A549 (cell line): ENCODE measurements at regions of chr2 and their contacts with region 1.

Region 1: DNA sequence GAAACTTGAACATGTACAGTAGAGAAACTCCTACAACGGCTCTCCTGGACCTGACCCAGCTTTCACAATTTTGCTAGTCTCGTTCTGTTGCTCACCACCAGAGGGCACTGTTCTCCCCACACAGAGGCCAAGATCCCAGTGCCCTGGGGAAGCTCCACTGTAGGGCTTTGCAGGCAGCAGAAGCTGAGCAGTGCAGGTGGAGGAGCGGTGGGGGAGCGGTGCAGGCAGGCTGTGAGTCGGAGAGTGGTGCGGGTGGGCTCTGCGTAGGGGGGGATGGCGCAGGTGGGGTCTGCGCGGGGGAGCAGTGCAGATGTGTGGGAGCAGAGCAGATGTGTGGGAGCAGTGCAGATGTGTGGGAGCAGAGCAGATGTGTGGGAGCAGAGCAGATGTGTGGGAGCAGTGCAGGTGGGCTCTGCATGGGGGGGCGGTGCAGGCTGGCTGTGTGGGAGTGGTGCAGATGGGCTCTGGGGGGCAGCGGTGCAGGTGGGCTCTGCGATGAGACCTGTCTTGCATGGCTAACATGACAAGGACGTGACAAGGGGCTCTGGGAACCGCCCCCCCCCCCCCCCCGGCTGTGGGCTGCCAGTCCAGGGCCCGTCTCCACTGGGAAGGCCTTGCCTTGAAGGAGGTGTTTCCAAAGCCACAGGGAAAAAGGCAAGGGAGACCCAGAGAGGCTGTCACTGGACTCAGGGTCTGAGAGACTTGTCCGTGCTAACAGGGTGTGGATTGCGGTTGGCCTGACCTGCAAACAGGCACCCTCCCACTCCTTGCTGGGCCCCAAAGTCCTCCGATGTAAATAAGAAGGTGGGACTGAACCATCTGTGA is 7.3 kb downstream of the CYS1 start:
- DNase-seq: peak; percentile 88 to 95
- ATAC-seq: peak; percentile 94 to 96
- H3K4me3 ChIP-seq: no peak overlapping the region
- H3K27ac ChIP-seq: no peak overlapping the region
- H3K4me1 ChIP-seq: peaks cover 4% of the 10 kb centered on the region; the same call in 1 of the 3 replicates
- CTCF ChIP-seq: peak; percentile 95
- EP300 ChIP-seq: no peak
- POLR2A ChIP-seq: no peak
- RAD21 ChIP-seq: peak; percentile 81 to 85

Region 2: DNA sequence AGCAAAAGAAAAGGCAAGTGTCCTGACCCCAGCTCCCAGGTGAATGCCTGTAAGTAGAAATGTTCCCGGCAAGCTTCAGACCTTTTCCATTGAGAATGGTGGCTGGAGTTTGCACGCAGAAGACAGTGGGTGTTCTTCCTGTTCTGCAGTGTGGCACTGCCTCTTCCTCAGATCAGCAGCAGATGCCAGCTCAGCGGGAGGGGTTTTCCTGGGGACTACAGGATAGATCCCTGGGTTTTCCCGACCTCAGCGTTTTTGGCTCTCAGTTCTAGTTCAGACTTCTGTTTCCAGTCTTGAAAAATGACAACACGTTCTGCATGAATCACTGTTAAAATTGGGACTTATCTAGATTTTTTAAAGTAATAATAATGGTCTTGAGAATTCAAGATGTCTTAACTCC is 82.1 kb before region 1 on chr2:
- CTCF ChIA-PET with region 1: interaction called, 10 read pairs
- POLR2A ChIA-PET with region 1: no interaction called
- DNase-seq: no peak
- ATAC-seq: no peak
- H3K4me3 ChIP-seq: no peak overlapping the region
- H3K27ac ChIP-seq: no peak overlapping the region
- H3K4me1 ChIP-seq: no peaks in the 10 kb centered on the region
- CTCF ChIP-seq: no peak
- EP300 ChIP-seq: no peak
- POLR2A ChIP-seq: no peak
- RAD21 ChIP-seq: no peak

Region 3: GRCh38 chr2:10016001-10016801 is 56.7 kb before region 1 on chr2:
- CTCF ChIA-PET with region 1: no interaction called
- POLR2A ChIA-PET with region 1: no interaction called
- DNase-seq: no peak
- ATAC-seq: peak in 1 of 2 experiments; percentile 35; a peak in 3 of 6 replicates
- H3K4me3 ChIP-seq: no peak overlapping the region
- H3K27ac ChIP-seq: no peak overlapping the region
- H3K4me1 ChIP-seq: no peaks in the 10 kb centered on the region
- CTCF ChIP-seq: no peak
- EP300 ChIP-seq: no peak
- POLR2A ChIP-seq: no peak
- RAD21 ChIP-seq: no peak

Region 4: GRCh38 chr2:10057231-10058107 is 15.4 kb before region 1 on chr2:
- CTCF ChIA-PET with region 1: interaction called, 103 read pairs
- POLR2A ChIA-PET with region 1: no interaction called
- DNase-seq: no peak
- ATAC-seq: peak in 1 of 2 experiments; percentile 16; a peak in 3 of 6 replicates
- H3K4me3 ChIP-seq: no peak overlapping the region
- H3K27ac ChIP-seq: no peak overlapping the region
- H3K4me1 ChIP-seq: no peaks in the 10 kb centered on the region
- CTCF ChIP-seq: no peak
- EP300 ChIP-seq: no peak
- POLR2A ChIP-seq: no peak
- RAD21 ChIP-seq: no peak

Region 5: DNA sequence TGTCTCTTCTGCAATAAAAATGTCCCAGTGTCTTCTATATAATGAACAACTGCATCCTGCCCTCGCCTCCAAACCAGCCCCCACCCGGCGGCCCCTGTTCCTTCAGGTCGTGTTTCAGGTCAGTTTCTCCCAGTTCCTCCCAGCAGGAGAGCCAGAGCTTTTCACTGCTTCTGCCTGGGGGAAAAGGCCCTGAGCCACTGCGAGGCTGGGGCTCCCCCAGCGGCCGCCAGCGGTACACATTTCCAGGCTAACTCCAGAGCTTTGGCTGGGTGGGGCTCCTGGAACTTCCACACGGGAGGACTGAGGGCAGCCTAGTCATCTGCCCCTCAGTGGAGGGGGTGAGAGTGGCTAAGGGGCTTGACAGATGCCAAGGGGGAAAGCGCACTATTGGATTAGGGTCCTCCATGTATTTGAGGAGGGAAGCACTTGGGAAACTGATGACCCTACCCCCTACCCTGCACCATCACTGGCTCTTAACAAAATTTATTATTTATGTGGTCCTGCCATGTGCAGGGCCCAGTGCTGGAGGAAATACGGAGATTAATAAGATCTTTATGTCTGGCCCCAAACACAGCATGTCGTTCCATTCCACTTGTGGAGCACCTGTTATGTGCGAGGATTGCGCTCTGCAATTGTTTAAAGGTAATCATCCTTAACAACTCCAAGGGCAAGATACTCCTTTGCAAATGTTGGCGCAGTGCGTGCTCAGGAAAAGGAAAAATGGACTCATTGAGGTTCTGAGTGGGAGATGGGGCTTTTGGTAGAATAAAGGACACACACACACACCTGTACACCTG is 24.7 kb after region 1 on chr2:
- CTCF ChIA-PET with region 1: interaction called, 612 read pairs
- POLR2A ChIA-PET with region 1: interaction called, 4 read pairs
- DNase-seq: peak; percentile 70 to 97
- ATAC-seq: peak; percentile 97 to 99
- H3K4me3 ChIP-seq: no peak overlapping the region
- H3K27ac ChIP-seq: no peak overlapping the region
- H3K4me1 ChIP-seq: peaks cover 5% of the 10 kb centered on the region
- CTCF ChIP-seq: peak; percentile 88
- EP300 ChIP-seq: no peak
- POLR2A ChIP-seq: no peak
- RAD21 ChIP-seq: peak; percentile 81 to 86

Region 6: GRCh38 chr2:10103179-10103732 is 30.4 kb after region 1 on chr2:
- CTCF ChIA-PET with region 1: interaction called, 612 read pairs
- POLR2A ChIA-PET with region 1: interaction called, 3 read pairs
- DNase-seq: no peak
- ATAC-seq: no peak
- H3K4me3 ChIP-seq: no peak overlapping the region
- H3K27ac ChIP-seq: no peak overlapping the region
- H3K4me1 ChIP-seq: peaks cover 7% of the 10 kb centered on the region; the same call in 1 of the 3 replicates
- CTCF ChIP-seq: no peak
- EP300 ChIP-seq: no peak
- POLR2A ChIP-seq: no peak
- RAD21 ChIP-seq: no peak

Region 7: GRCh38 chr2:10150436-10150835 is 77.6 kb after region 1 on chr2:
- CTCF ChIA-PET with region 1: no interaction called
- POLR2A ChIA-PET with region 1: no interaction called
- DNase-seq: no peak
- ATAC-seq: no peak
- H3K4me3 ChIP-seq: no peak overlapping the region
- H3K27ac ChIP-seq: no peak overlapping the region
- H3K4me1 ChIP-seq: no peaks in the 10 kb centered on the region
- CTCF ChIP-seq: no peak
- EP300 ChIP-seq: no peak
- POLR2A ChIP-seq: no peak
- RAD21 ChIP-seq: no peak

Region 8: GRCh38 chr2:10424051-10424450 is 351.2 kb after region 1 on chr2:
- CTCF ChIA-PET with region 1: interaction called, 12 read pairs
- POLR2A ChIA-PET with region 1: no interaction called
- DNase-seq: no peak
- ATAC-seq: no peak
- H3K4me3 ChIP-seq: no peak overlapping the region
- H3K27ac ChIP-seq: no peak overlapping the region
- H3K4me1 ChIP-seq: no peaks in the 10 kb centered on the region
- CTCF ChIP-seq: no peak
- EP300 ChIP-seq: no peak
- POLR2A ChIP-seq: no peak
- RAD21 ChIP-seq: no peak

Region 9: GRCh38 chr2:10448208-10448645 is 375.4 kb after region 1 on chr2 and contains the start of gene ODC1:
- CTCF ChIA-PET with region 1: interaction called, 12 read pairs
- POLR2A ChIA-PET with region 1: interaction called, 3 read pairs
- DNase-seq: peak; percentile 80 to 93
- ATAC-seq: peak; percentile 69 to 72
- H3K4me3 ChIP-seq: peak within 1 kb of the TSS; percentile 78
- H3K27ac ChIP-seq: peak within 1 kb of the TSS; percentile 90 to 98
- H3K4me1 ChIP-seq: peaks cover 56% of the 10 kb centered on the region
- CTCF ChIP-seq: no peak
- EP300 ChIP-seq: no peak; a peak in 2 of 5 replicates
- POLR2A ChIP-seq: peak; percentile 59
- RAD21 ChIP-seq: no peak
- polyA plus RNA-seq, gene ODC1: 198 and 265 TPM in 2 replicates